ENCODE measurements at regions of chr6 and their contacts with region 1.

Region 1: GRCh38 chr6:37381579-37381978 is 27.8 kb downstream of the RNF8 start:
- DNase-seq: peak; percentile 32
- ATAC-seq: peak; percentile 87
- H3K4me3 ChIP-seq: no peak overlapping the region
- H3K27ac ChIP-seq: no peak overlapping the region
- H3K4me1 ChIP-seq: peaks cover 3% of the 10 kb centered on the region; the same call in 1 of the 2 replicates
- H3K27me3 ChIP-seq: no peaks in the 10 kb centered on the region
- CTCF ChIP-seq: peak; percentile 72 to 85 (median 83)
- EP300 ChIP-seq: no peak
- POLR2A ChIP-seq: no peak
- RAD21 ChIP-seq: peak; percentile 76

Region 2: DNA sequence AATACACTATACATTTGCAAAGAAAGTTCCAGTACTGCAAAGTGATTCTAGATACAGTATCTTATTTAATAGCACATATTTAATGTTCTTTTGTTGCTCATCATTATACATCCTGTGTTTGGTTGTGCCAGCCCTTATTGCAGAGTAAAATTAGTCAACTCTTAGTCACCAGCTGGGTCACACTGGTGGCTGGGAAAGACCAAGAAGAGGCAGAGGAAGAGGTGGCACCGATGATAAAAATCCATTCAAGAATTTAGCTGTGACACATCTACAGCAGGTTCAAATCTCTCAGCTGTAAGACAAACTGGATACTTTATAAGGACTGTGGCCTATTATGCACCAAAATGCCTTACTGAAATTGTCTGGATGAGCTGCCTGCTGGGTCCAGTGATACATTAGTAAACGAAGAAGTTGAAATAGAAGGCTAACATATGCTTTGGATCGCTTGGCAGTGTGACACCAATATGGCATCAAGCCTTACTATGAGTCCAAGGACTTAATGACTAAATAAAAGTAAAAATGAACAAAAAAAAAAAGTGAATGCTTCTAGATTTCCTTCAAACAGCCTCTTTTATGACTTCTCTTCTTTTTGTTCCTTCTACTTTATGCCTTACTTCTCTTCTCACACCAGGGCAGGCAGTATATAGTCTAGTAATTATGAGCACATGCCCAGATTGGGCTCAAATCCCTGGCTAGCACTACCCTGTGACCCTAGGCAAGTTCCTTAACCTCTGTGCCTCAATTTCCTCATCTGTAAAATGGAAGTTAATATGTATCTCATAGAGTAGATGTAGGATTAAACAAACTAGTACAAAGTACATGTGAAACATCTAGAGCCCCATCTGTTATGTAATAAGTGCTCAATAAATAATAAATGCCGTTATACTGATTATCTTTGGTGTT is 57.2 kb before region 1 on chr6:
- CTCF ChIA-PET with region 1: interaction called, 10 read pairs
- POLR2A ChIA-PET with region 1: no interaction called
- RAD21 ChIA-PET with region 1: interaction called, 4 read pairs
- SMC1A ChIA-PET with region 1: interaction called, 4 read pairs
- in situ Hi-C with region 1: no loop called
- intact Hi-C with region 1: no loop called
- DNase-seq: no peak
- ATAC-seq: no peak
- H3K4me3 ChIP-seq: no peak overlapping the region
- H3K27ac ChIP-seq: no peak overlapping the region
- H3K4me1 ChIP-seq: no peaks in the 10 kb centered on the region
- H3K27me3 ChIP-seq: no peaks in the 10 kb centered on the region
- CTCF ChIP-seq: no peak
- EP300 ChIP-seq: no peak
- POLR2A ChIP-seq: no peak
- RAD21 ChIP-seq: no peak

Region 3: GRCh38 chr6:37365762-37366161 is 15.8 kb before region 1 on chr6:
- CTCF ChIA-PET with region 1: interaction called, 12 read pairs
- POLR2A ChIA-PET with region 1: interaction called, 4 read pairs
- RAD21 ChIA-PET with region 1: no interaction called
- SMC1A ChIA-PET with region 1: interaction called, 3 read pairs
- in situ Hi-C with region 1: no loop called
- intact Hi-C with region 1: no loop called
- DNase-seq: no peak
- ATAC-seq: no peak
- H3K4me3 ChIP-seq: no peak overlapping the region
- H3K27ac ChIP-seq: no peak overlapping the region
- H3K4me1 ChIP-seq: peaks cover 14% of the 10 kb centered on the region
- H3K27me3 ChIP-seq: no peaks in the 10 kb centered on the region
- CTCF ChIP-seq: peak in 1 of 3 experiments; percentile 30; a peak in 1 of 6 replicates
- EP300 ChIP-seq: no peak
- POLR2A ChIP-seq: no peak
- RAD21 ChIP-seq: peak; percentile 50